ENCODE measurements at regions of chr3 and their contacts with region 1.

Region 1: GRCh38 chr3:129039271-129040038 is 21.1 kb upstream of the GP9 start:
- DNase-seq: no peak
- H3K4me3 ChIP-seq: no peak overlapping the region
- H3K27ac ChIP-seq: no peak overlapping the region
- H3K4me1 ChIP-seq: peaks cover 0 to 7% (median 0%) of the 10 kb centered on the region in 4 donors
- H3K27me3 ChIP-seq: peaks cover 0 to 17% of the 10 kb centered on the region in 2 donors
- CTCF ChIP-seq: no peak

Region 2: GRCh38 chr3:129095285-129095684 is 55.8 kb after region 1 on chr3:
- intact Hi-C with region 1: loop called (anchors 10 kb)
- DNase-seq: no peak
- H3K4me3 ChIP-seq: no peak overlapping the region
- H3K27ac ChIP-seq: no peak overlapping the region
- H3K4me1 ChIP-seq: no peaks in the 10 kb centered on the region
- H3K27me3 ChIP-seq: no peaks in the 10 kb centered on the region
- CTCF ChIP-seq: no peak